Sigmoid colon (tissue), 7 donors: ENCODE measurements at regions of chr14 and their contacts with region 1.

Region 1: DNA sequence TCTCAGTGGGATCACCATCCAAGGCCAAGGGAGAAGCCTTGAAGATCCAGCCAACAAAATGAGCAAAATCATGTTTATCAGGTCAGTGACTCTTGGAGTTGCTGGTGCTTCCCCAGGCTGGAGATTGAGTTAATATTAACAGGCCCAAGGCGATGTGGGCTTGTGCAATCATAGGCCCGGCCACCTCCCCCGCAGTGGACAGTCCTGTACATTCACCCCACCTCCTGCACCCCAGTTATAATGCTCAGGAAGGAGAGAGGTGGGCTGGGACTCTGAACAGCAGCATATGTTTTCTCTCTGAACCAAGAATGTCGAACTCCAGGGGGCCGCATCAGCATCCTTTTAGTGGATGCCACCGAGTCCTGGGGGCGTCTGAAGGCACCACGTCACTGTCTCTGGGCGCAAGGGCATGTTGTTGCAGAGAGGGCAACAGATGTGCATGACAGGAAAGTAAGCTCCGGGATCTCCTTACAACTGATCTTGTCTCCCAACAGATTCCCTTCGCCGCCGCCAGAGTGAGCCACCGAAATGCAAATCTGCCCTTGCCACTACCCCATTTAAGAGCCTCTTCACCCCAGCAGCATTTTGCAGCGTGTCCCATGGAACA is 32.2 kb upstream of the SERPINA6 start:
- DNase-seq: no peak
- H3K4me3 ChIP-seq: no peak overlapping the region
- H3K27ac ChIP-seq: no peak overlapping the region
- H3K4me1 ChIP-seq: no peaks in the 10 kb centered on the region
- H3K27me3 ChIP-seq: no peaks in the 10 kb centered on the region
- CTCF ChIP-seq: peak in 1 of 4 experiments; percentile 27
- EP300 ChIP-seq: no peak
- POLR2A ChIP-seq: no peak

Region 2: DNA sequence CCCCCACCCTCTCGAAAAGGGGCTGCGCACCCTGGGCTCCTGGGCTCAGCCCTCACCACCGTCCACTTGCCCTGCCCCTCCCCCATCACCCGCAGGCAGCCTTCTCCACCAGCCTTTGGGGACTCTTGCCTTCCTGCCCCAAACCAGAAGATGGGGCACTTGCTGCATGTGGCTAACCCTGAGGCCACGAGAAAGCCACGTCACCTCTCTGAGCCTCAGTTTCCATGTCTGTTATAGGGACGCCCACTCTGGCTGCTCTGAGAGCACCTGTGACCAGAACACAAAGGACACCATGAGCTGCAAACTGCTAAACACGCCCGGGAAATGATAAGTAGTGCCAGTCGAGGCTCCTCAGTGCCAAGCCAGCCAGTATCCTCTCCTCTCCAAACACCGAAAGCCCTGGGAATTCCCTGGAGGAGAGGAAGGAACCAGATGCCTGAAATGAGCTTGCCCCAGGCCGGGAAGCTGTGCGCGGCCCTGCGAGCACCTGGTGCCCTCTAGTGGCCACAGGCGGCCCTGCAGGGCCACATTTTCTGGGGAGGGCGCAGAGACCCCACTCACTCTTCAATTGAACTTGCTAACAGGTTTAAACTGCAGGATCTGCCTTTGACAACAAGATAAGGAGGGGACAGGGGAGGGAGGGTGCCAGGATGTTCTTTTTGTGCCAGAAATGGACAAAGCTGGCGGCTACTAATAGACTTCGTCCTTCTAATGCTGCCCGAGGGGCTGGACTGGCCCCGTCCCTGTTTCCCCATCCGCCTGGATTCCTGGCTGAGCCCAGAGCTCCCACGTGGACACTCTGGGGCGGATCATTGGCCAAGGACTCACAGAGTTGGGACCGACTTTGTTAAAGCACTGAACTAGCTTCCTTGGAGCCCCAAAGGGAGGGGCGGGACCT is 130.9 kb after region 1 on chr14:
- intact Hi-C with region 1: loop called (anchors 5 kb)
- DNase-seq: peak; percentile 71
- H3K4me3 ChIP-seq: no peak overlapping the region
- H3K27ac ChIP-seq: no peak overlapping the region
- H3K4me1 ChIP-seq: peaks cover 0 to 9% (median 7%) of the 10 kb centered on the region in 4 donors
- H3K27me3 ChIP-seq: peaks cover 0 to 29% (median 9%) of the 10 kb centered on the region in 3 donors
- CTCF ChIP-seq: peak; percentile 72 to 99 (median 85)
- EP300 ChIP-seq: no peak
- POLR2A ChIP-seq: no peak

Region 3: DNA sequence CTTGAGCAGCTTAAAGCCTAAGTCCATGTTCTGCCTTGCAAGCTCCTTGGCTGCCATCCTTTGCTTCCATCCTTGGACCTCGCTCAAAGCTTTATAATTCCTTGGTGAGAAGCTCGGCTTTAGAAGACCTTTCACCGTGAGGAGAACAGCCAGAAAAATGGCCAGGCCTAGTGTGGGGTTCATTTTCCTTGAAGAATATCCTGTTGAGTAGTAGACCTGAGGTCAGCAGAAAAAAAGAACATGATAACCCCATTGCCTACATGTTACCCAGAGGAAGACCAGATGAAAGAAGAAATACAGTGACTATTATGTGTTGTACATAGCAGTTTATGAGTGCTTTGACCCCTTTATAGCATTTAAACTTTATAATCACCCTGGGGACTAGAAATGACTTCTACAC is 142.9 kb after region 1 on chr14:
- intact Hi-C with region 1: no loop called
- DNase-seq: no peak
- H3K4me3 ChIP-seq: no peak overlapping the region
- H3K27ac ChIP-seq: no peak overlapping the region
- H3K4me1 ChIP-seq: no peaks in the 10 kb centered on the region
- H3K27me3 ChIP-seq: peaks cover 0 to 6% (median 0%) of the 10 kb centered on the region in 3 donors
- CTCF ChIP-seq: no peak
- EP300 ChIP-seq: no peak
- POLR2A ChIP-seq: no peak